Adrenal gland (tissue), 19 donors: ENCODE measurements at regions of chrX and their contacts with region 1.

Region 1: DNA sequence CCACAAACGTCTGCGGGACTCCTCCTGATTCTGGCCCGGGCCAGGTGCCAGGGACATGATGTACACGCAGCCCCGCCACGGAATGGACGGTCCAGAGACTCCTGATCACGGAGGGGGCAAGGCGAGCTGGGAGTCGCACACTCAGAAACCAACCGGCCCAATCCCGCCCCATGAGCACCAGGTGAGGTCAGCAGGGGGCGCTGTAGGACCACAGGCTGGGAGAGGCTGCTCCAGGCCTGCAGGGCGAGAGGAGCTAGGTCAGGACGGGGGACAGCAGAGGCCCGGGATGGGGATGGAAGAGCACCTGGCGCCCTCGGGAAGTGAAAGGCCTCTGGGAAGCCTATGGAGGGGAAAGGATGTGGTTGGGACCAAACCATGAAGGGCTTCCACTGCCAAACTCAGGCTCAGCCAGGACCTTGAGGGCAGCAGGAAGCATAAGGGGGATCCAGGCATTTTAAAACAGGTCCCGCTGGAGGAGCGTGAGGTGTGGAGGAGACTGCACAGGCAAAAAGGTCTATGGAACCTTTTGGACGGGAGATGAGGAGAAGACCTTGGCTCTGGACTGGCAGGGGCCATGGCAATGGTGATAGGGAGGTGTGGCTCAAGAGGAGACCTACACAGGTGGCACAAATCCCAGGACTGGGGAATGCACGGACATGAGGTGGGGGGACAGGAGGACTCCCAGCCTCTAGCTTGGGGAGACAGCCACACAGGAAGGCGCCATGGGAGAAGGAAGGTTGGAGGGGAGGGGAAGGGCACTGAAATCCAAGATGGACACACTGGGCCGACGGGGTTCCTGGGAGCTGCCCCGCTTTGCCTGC is 79.2 kb downstream of the MTMR1 start:
- DNase-seq: peak; percentile 72 to 86 (median 78)
- H3K4me3 ChIP-seq: no peak overlapping the region
- H3K27ac ChIP-seq: no peak overlapping the region
- H3K4me1 ChIP-seq: no peaks in the 10 kb centered on the region
- H3K27me3 ChIP-seq: no peaks in the 10 kb centered on the region
- CTCF ChIP-seq: peak; percentile 60 to 92 (median 81)
- POLR2A ChIP-seq: no peak

Region 2: DNA sequence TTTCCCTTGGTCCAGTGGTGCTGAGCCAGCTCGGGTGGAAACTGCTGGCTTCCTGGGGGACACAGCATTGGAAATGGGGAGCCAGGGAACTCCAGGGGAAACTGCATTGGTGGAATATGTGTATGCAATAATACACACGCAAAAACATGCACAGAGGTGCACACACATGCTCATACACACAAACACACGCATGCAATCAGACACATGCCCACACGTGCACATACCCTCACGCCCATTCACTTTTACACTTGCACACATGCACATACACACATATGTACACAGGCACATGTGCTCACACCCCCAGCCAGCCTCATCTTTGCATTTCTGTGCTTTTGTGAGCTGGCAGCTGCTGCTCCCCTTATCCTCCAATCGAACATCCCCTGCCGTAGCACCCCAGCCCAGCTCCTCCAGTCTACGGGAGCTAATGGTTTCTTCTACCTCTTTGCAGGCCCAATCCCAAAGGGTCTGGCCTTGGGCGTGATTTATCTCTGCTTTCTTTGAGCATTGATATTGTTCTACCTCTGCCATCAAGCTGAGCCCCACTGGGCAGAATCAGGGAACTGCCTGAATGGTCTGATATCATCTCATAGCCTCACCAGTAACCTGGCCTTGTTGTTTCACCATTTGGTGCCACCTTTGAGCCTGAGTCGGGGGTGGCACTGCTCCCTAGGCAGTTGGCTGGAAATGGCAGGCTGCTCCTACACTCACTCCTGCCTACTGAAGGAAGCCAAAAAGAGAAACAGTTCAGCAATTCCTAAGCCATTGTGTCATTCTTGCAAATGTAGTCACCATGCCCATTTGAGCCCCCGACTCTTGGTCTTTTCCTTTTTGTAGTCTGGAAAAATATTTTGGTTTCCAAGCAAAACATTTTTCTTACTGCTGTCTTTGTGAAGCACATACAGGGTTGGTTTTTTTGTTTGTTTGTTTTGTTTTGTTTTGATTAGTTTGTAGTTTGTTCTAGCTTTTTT is 513.6 kb before region 1 on chrX:
- intact Hi-C with region 1: no loop called
- DNase-seq: no peak
- H3K4me3 ChIP-seq: no peak overlapping the region
- H3K27ac ChIP-seq: no peak overlapping the region
- H3K4me1 ChIP-seq: no peaks in the 10 kb centered on the region
- H3K27me3 ChIP-seq: peaks cover 6% of the 10 kb centered on the region
- CTCF ChIP-seq: no peak
- POLR2A ChIP-seq: no peak

Region 3: GRCh38 chrX:150813922-150814321 is 41.6 kb after region 1 on chrX:
- intact Hi-C with region 1: no loop called
- DNase-seq: no peak
- H3K4me3 ChIP-seq: no peak overlapping the region
- H3K27ac ChIP-seq: no peak overlapping the region
- H3K4me1 ChIP-seq: no peaks in the 10 kb centered on the region
- H3K27me3 ChIP-seq: no peaks in the 10 kb centered on the region
- CTCF ChIP-seq: no peak
- POLR2A ChIP-seq: no peak

Region 4: DNA sequence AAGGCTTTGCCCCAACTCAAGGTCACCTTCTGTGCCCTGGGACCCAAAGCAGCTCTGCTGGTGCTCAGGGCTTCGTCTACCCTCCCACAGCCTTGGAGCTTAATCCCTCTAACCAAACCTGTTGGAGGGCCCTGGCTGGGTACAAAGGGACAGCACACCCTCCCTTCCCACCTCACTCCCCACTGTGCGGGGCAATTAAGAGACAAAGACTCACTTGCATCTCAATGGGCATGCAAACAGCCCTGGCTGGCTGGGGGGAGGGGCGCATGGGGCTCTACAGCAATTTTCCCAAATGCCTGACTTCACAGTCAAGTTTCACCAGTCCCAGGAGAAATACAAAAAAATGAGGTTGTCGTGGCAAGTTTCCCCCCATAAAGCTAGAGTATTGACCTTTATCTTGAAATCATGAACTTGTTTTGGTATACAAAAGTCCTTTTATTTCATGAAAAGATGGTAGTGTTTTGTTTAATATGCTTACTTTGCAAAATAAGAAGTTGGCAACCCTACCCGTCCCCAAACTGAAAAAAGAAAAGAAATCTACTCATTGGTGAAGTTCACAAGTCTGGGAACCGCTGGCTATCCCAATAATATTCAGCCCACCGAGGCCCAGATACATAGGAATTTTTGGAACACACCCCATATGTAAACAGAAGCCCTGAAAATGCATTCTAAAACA is 130.2 kb after region 1 on chrX:
- intact Hi-C with region 1: loop called in 1 of 2 experiments (anchors 10 kb)
- DNase-seq: no peak
- H3K4me3 ChIP-seq: no peak overlapping the region
- H3K27ac ChIP-seq: no peak overlapping the region
- H3K4me1 ChIP-seq: peaks cover 0 to 1% of the 10 kb centered on the region in 2 donors
- H3K27me3 ChIP-seq: no peaks in the 10 kb centered on the region
- CTCF ChIP-seq: no peak
- POLR2A ChIP-seq: no peak

Region 5: DNA sequence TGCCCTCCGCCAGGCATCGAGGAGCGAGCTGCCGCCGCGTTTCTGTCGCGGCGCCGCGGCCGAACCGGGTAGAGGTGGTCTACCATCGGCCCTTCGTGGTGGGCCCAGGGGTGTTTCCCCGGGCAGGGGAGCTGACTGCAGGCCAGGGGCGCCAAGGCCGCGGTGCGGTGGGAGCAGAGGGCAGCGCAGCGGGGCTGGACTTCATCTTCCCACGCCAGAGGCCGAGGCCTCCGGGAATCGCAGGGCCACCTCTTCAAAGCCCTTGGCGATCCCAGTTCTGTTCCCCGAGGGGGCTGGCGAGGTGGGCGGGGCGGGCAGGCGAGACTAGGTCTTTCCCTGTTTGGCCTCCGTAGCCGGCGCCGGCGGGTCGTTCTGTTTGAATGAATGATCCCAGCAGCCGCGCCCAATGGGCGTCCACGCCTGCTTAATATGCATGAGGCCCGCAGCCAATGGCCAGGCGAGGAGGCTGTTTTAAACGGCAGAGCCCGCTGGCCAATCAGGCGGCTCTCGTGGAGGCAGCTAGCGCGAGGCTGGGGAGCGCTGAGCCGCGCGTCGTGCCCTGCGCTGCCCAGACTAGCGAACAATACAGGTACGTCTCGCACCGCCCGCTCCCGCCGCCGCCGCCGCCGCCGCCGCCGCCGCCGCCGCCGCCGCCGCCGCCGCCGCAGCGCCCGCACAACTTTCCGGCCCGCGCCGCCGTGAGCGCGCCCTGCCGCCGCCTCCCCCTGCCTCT is 210.6 kb after region 1 on chrX and contains the start of gene HMGB3:
- intact Hi-C with region 1: loop called in 1 of 2 experiments (anchors 10 kb)
- DNase-seq: peak; percentile 79 to 94 (median 89)
- H3K4me3 ChIP-seq: peak within 1 kb of the TSS in 2 of 4 donors; percentile 16 to 65
- H3K27ac ChIP-seq: peak within 1 kb of the TSS in 2 of 5 donors; percentile 21 to 68
- H3K4me1 ChIP-seq: no peaks in the 10 kb centered on the region
- H3K27me3 ChIP-seq: no peaks in the 10 kb centered on the region
- CTCF ChIP-seq: no peak
- POLR2A ChIP-seq: peak; percentile 28 to 78
- total RNA-seq, gene HMGB3: 3.9 to 26.8 (median 17.6) TPM

Region 6: GRCh38 chrX:151004082-151004481 is 231.7 kb after region 1 on chrX:
- intact Hi-C with region 1: loop called in 1 of 2 experiments (anchors 10 kb)
- DNase-seq: peak in 1 of 7 donors; percentile 21
- H3K4me3 ChIP-seq: no peak overlapping the region
- H3K27ac ChIP-seq: no peak overlapping the region
- H3K4me1 ChIP-seq: no peaks in the 10 kb centered on the region
- H3K27me3 ChIP-seq: no peaks in the 10 kb centered on the region
- CTCF ChIP-seq: peak in 3 of 6 experiments; percentile 29 to 42 (median 30)
- POLR2A ChIP-seq: no peak

Region 7: DNA sequence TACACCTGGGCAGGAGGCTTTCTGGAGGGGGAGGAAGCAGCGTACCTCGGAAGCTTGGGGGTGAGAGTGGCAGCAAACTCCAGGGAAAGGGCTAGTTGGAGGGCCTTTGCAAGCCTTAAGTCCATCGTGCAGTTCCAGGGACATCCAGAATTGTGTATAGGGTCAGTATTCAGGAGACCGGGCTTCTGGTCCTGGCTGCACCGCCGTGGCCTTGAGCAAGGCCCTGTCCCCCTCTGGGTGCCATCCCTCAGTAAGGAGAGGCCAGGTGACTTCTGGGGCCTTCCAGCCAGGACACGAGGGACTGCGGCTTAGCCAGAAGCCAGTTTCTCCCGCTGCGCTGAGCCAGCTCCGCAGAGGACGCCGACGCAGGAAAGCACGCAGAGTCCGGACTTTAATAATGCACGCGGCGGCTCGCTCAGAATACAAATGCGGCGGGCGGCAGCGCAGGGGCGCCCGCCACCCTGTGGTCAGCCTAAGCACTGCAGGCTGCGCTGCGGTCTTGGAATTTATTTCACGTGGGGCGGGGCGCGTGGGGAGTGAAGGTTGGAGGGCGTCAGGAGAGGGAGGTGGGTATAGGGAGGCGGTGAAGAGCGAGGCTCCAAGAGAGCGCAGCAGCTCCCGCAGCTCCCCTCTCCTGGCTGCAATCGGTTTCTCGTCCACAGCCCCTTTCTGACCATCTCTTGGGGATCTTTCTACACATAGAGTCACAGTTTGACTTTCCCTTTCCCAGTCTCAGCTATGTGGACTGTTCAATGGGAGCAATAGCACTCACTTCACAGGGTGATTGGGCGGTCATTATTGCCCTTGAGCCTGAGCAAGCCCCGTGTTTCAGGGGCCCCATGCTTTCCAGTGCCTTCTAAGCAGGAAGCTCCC is 310.0 kb after region 1 on chrX:
- intact Hi-C with region 1: loop called (anchors 5 kb)
- DNase-seq: peak; percentile 40 to 80 (median 64)
- H3K4me3 ChIP-seq: no peak overlapping the region
- H3K27ac ChIP-seq: no peak overlapping the region
- H3K4me1 ChIP-seq: peaks cover 0 to 4% of the 10 kb centered on the region in 2 donors
- H3K27me3 ChIP-seq: peaks cover 6% of the 10 kb centered on the region
- CTCF ChIP-seq: peak; percentile 78 to 95 (median 91)
- POLR2A ChIP-seq: no peak